Activated CD4-positive, alpha-beta T cell treated with anti-CD3 and anti-CD28 coated beads for 36 hours (primary cell): ENCODE measurements at regions of chr20 and their contacts with region 1.

Region 1: DNA sequence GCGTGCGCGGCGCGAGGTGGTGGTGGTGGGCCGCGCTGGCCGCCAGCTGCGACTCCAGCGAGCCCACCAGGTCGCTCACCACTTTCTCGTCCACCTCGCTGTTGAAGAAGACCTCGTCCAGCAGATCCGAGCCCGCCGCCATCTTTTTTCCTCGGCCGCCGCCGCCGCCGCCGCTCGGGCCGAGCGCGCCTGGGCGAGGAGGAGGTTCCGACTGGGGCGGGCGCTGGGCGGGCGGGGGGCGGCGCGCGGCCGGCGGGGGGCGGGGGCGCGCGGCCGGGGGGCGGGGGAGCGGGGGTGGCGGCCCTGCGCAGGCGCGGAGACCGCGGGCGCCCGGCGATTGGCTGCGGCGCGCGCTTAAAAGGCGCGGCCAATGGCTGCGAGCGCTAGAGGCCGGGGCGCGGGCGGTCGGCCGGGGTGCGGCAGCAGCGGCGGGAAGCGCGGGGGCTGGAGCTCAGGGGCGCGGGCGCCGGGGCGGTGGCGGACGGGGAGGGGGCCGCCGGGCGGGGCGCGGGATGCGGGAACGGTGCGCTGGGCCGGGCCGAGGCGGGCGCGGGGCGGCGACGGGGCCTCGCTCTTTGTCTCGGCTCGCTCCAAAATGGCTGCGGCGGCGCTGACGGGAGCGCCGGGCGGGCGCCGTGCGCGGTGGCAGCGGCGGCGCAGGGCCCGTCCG is at the start of gene TAF4:
- DNase-seq: peak; percentile 87
- ATAC-seq: peak; percentile 79
- H3K4me3 Mint-ChIP-seq: peak within 1 kb of the TSS; percentile 75
- H3K27ac Mint-ChIP-seq: peak within 1 kb of the TSS; percentile 78
- H3K4me1 Mint-ChIP-seq: peaks cover 53% of the 10 kb centered on the region
- H3K27me3 Mint-ChIP-seq: no peaks in the 10 kb centered on the region
- total RNA-seq, gene TAF4: 15.4 to 27.1 TPM

Region 2: GRCh38 chr20:62025832-62026563 is 39.8 kb before region 1 on chr20:
- CTCF ChIA-PET with region 1: no interaction called
- POLR2A ChIA-PET with region 1: interaction called, 3 read pairs
- intact Hi-C with region 1: loop called (anchors 2 to 5 kb)
- DNase-seq: peak; percentile 45
- ATAC-seq: peak; percentile 81
- H3K4me3 Mint-ChIP-seq: no peak overlapping the region
- H3K27ac Mint-ChIP-seq: peak overlapping the region; percentile 22
- H3K4me1 Mint-ChIP-seq: peaks cover 54% of the 10 kb centered on the region
- H3K27me3 Mint-ChIP-seq: no peaks in the 10 kb centered on the region

Region 3: DNA sequence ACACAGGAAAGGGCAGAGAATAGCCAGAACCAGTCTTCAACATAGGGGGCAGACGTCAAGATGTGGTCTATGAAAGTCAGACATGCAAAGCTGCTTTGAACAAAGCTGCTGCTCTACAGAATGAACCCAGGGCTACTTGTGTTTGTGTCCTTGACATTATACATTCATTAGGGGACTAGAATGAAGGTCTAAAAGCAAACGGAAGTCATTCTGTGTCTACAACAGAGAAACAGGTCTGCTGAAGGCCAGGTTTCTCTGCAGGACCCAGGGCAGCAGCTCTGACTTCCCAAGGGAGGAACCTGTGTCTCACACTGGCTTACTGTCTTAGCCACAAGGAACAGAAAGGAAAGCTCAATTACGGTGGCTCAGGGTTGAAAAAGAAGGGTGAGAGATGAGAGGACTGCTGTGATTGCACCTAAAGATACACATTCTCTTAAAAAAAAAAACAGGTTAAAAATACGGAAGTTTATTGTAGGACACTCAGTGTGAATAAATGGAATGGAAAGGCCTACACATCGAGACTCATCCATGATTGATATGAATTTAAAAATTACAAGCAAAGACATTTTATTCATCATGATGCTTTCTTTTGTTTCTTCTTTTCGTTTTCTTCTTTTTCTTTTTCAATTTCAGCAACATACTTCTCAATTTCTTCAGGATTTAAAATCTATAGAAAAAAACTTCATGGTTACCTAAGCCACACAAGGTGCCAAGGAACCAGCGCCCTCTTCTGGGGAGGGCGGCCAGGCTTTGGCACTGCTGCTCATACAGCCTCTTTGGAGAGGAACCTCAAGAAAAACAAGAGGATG is 70.7 kb after region 1 on chr20:
- CTCF ChIA-PET with region 1: interaction called, 3 read pairs
- POLR2A ChIA-PET with region 1: interaction called, 9 read pairs
- intact Hi-C with region 1: loop called in 1 of 2 experiments (anchors 2 kb)
- DNase-seq: peak; percentile 83
- ATAC-seq: peak; percentile 51
- H3K4me3 Mint-ChIP-seq: no peak overlapping the region
- H3K27ac Mint-ChIP-seq: peak overlapping the region; percentile 75
- H3K4me1 Mint-ChIP-seq: peaks cover 41% of the 10 kb centered on the region
- H3K27me3 Mint-ChIP-seq: no peaks in the 10 kb centered on the region

Region 4: DNA sequence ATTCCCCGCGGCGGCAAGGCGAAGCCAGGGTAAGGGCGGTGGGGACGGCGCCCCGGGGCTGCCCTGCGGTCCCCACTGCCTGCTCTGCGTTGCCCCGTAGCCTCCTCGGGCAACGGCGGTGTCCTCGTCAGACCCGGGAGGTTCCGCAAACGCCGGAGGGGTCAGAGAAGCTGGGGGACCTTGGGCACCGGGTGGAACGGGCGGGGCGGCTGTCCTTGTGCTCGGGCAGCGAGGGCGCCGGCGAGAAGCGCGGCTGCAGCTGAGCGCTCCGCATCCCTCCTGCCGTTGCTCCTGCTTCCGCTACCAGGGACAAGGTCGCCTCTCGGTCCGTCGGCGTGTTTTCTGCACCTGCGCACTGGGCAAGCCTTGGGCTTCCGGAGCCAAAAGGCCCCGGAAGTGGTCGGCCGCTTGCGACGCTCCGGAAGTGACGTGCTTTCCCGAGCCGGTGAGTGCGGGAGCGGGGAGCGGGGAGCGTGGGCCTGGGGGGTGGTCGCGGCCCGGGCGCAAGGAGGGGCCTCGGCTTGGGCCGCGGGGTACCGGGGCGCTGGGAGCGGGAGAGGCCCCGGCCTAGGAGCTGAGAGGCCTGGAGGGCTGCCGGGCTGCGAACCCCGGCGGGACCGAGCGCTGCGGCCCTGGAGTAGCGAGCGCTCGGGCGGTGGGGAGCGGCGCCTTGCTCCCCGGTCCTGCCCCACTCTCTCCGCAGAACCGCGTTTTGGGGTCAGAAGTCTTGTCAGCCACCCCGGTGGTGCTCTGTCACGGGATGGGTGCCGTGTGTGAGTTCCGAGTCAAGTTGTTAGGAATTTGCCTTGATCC is 117.0 kb after region 1 on chr20 and contains the start of gene MTG2:
- CTCF ChIA-PET with region 1: no interaction called
- POLR2A ChIA-PET with region 1: interaction called, 4 read pairs
- intact Hi-C with region 1: loop called in 1 of 2 experiments (anchors 1 kb)
- DNase-seq: peak; percentile 97
- ATAC-seq: peak; percentile 99
- H3K4me3 Mint-ChIP-seq: peak within 1 kb of the TSS; percentile 88
- H3K27ac Mint-ChIP-seq: peak within 1 kb of the TSS; percentile 87
- H3K4me1 Mint-ChIP-seq: peaks cover 39% of the 10 kb centered on the region
- H3K27me3 Mint-ChIP-seq: no peaks in the 10 kb centered on the region
- total RNA-seq, gene MTG2: 38.0 to 44.9 TPM

Region 5: DNA sequence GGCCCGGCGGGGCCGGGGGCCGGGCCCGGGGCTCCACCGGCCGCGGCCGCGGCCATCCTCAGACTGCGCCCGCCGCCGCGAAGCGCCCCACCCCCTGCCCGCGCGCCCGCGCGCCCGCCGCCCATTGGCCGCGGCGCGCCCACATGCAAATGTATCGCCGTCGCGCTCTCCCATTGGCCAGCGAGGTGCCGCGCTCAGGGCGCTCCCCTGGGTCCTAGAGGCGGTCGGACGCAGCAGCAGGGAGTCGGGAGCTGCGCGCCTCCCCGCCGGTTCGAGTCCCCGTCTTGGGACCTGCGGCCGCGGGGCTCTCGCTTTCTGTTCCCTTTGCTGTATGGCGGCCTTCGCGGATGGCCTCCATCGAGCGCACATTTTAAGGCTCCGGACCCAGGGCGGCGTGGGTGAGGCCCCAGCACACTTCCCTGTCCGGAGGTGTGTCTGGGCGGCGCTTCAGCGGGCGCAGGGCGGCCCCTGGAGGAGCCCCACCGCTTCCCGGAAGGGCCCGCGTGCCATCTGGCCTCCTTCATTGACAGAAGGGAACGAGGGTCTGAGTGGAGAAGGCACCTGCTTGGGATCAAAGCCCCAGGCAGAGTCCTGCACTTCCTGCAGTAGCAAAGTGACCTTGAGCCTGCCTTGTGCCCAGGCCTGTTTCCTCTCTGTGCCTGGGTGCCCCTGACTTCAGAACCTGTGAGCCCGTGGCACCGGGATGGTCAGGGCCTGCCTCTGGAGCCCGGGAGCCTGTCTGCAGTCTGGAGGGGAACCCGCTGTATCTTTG is 341.6 kb after region 1 on chr20 and contains the start of gene CABLES2:
- CTCF ChIA-PET with region 1: no interaction called
- POLR2A ChIA-PET with region 1: no interaction called
- intact Hi-C with region 1: loop called in 1 of 2 experiments (anchors 5 kb)
- DNase-seq: peak; percentile 96
- ATAC-seq: peak; percentile 93
- H3K4me3 Mint-ChIP-seq: peak within 1 kb of the TSS; percentile 72
- H3K27ac Mint-ChIP-seq: peak within 1 kb of the TSS; percentile 82
- H3K4me1 Mint-ChIP-seq: peaks cover 23% of the 10 kb centered on the region
- H3K27me3 Mint-ChIP-seq: peaks cover 2% of the 10 kb centered on the region
- total RNA-seq, gene CABLES2: 6.4 to 7.6 TPM